GM10248 (cell line): ENCODE measurements at regions of chr20 and their contacts with region 1.

Region 1: DNA sequence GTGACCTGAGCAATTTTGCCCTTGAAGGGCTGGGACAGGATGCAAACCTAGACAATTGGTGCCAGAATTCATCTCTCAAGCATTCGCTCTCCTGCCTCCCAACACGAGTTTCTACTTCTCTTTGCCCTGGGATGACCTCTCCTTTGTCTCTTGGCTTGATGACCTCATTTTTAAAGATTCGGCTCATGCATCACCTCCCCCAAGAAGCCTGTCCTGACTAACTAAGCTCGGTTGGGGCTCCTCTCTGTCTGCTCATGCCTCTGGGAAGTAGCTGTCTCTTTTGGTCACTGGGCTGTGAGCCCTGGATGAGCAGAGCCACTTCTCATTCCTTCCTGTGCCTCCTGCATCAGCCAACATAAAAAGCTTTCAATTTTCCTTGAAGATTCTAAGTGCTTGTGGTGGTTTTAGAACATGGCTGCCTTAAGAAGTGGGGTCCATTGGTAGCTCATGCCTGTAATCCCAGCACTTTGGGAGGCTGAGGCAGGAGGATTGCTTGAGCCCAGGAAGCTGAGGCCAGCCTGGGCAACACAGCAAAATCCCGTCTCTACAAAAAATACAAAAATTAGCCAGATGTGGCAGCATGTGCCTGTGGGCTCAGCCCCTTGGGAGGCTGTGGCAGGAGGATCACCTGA is 11.1 kb upstream of the TCF15 start:
- DNase-seq: no peak
- CTCF ChIP-seq: no peak

Region 2: GRCh38 chr20:603176-603575 is 18.1 kb before region 1 on chr20:
- CTCF ChIA-PET with region 1: interaction called, 10 read pairs
- POLR2A ChIA-PET with region 1: no interaction called
- DNase-seq: no peak
- CTCF ChIP-seq: no peak

Region 3: GRCh38 chr20:634556-634955 is 13.3 kb after region 1 on chr20:
- CTCF ChIA-PET with region 1: interaction called, 17 read pairs
- POLR2A ChIA-PET with region 1: no interaction called
- DNase-seq: no peak
- CTCF ChIP-seq: no peak